ENCODE measurements at regions of chr11 and their contacts with region 1.

Region 1: DNA sequence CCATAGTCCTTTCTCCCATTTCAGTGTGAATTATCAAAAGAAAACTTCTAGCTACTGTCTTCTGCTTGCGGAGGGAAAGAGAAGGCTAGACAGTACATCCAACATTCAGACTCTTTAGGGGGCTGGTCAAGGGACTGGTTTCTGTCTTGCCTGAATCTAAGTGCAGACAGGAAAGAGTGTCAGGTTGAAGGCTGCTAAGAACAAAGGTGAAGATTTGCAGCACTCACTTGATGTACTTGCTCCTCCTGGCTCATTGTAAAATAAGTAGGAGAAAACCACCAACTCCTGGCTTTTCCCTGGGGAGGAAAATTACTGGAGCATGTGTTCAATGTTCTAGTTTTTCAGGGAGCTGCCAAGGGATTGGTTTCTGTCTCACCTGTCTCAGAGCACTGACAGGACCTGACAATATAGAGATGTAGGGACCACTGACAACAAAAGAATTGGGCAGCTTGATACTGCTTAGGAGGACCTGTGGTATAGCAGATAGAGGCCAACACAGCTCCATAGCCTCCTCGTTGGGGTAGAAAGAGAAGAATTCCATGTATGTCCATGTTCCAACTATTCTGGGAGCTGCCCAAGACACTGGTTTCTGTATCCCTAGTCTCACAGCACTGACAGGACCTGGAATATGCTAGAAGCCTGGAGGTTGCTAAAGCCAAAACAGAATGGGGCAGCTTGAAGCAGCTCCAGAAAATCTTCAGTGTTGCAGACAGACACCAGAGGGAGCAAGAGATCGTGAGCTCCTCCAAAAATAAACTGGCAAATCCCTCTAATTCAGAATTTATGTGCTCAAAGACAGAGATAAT is 39.7 kb upstream of the MMP12 start:
- DNase-seq: no peak
- H3K4me3 ChIP-seq: no peak overlapping the region
- CTCF ChIP-seq: peak; percentile 68

Region 2: GRCh38 chr11:102810945-102811660 is 103.3 kb before region 1 on chr11:
- CTCF ChIA-PET with region 1: interaction called, 13 read pairs
- POLR2A ChIA-PET with region 1: no interaction called
- DNase-seq: no peak
- H3K4me3 ChIP-seq: no peak overlapping the region
- CTCF ChIP-seq: peak; percentile 35

Region 3: GRCh38 chr11:102831489-102832440 is 82.7 kb before region 1 on chr11:
- CTCF ChIA-PET with region 1: interaction called, 10 read pairs
- POLR2A ChIA-PET with region 1: no interaction called
- DNase-seq: no peak
- H3K4me3 ChIP-seq: peak overlapping the region; percentile 52
- CTCF ChIP-seq: peak; percentile 83

Region 4: DNA sequence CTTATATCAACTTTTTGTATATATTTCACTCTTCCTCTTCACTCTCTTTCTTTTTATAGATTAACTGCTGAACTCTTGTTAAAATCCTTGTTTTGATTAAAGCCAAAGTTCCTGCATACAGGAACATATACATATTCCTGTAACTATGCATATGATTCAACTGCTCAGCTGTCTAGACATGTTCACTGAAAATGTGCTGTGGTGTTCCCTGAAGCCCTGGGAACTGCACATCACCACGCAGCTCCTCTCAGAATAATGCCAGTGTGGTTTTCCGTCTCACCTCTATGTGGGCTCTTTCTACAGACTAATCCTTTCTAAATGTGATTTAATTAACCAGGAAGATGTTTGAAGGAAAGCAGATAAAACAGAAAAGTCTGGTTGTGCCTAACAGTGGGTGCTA is 14.1 kb before region 1 on chr11:
- CTCF ChIA-PET with region 1: interaction called, 21 read pairs
- POLR2A ChIA-PET with region 1: no interaction called
- DNase-seq: no peak
- H3K4me3 ChIP-seq: no peak overlapping the region
- CTCF ChIP-seq: no peak

Region 5: DNA sequence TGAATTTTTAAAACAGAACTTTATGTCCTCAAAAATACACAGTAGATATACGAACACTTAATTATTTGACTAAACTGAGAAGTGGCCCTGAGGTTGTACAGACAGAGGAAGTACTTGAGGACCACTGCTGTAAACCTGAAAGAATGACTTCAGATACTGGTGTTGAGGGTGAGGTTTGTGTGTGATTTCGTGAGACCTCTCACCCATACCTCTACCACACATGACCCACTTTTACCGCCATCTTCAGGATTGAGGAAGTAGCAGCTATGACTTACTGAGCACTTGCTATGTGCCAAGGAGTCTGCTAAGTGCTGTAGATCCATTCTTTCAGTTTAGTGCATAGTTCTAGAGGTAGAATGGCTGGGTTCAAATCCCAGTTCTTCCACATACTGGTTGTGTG is 19.2 kb after region 1 on chr11:
- CTCF ChIA-PET with region 1: interaction called, 95 read pairs
- POLR2A ChIA-PET with region 1: no interaction called
- DNase-seq: no peak
- H3K4me3 ChIP-seq: no peak overlapping the region
- CTCF ChIP-seq: no peak

Region 6: DNA sequence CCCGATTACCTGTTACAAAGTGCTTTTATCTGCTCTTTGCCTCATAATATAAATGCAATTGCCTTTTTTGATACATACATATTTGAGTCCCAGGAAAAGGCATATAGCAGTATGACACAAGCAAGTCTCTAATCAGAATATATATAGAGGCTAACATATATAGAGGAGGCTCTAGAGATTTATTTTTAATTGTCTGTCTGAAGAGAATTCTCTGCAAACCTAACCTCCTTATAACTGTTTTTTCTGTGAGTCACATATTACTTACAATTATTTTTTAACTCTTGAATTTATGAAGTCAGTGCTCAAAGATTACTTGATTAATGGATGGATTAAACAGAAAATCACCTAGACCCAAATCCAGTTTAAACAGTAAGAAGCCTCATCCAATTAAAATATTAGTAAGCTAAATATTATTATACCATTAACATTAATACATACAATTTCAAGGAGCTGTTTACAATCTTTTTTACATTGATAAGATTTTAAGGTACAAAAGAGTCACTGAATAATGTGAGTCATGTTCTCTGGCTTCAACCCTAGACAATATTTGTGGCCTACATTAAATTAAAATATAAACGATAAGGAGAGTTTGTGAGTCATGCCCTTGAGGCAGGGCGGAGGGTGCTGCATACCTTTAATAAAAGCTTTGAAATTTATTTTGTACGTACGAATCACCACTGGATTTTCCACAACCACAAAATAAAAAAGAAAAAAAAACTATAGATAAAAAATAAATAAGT is 60.3 kb after region 1 on chr11:
- CTCF ChIA-PET with region 1: interaction called, 12 read pairs
- POLR2A ChIA-PET with region 1: no interaction called
- DNase-seq: no peak
- H3K4me3 ChIP-seq: no peak overlapping the region
- CTCF ChIP-seq: no peak

Region 7: DNA sequence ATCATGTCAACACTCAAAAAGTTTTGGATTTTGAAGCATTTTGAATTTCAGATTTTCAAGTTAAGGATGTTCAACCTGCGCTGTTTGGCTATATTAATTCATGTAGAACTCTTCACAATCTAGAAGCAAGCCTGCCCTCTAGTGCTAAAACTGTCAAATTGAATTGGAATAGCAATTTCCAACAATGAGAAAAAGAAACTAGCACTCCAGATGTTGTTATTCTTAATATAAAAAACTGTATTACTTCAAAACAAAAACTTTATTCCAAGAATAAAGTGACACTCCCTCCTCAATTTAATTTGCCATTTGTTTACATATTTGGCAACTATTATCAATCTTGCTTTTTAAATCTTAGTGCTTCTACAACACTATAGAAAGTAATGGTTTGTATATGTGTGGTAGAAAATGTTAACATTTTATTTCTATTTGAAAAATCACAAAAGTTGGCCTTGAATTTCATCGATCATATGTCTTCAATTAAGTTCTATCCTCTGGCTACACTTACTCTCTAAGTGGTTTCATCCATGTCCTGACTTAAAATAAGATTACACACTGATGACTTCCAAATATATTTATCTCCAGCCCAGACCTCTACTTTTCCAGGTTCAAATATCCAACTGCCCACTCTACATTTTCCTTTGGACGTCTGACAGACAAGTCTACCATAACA is 140.9 kb after region 1 on chr11:
- CTCF ChIA-PET with region 1: interaction called, 47 read pairs
- POLR2A ChIA-PET with region 1: no interaction called
- DNase-seq: no peak
- H3K4me3 ChIP-seq: no peak overlapping the region
- CTCF ChIP-seq: peak; percentile 43